Activated CD8-positive, alpha-beta memory T cell treated with anti-CD3 and anti-CD28 coated beads, Interleukin-2, amount 10 ng/mL, durations not matched to agents 7 days and 5 days (primary cell): ENCODE measurements at regions of chr1 and their contacts with region 1.

Region 1: GRCh38 chr1:9705337-9706093 is 54.0 kb downstream of the PIK3CD start:
- DNase-seq: no peak
- ATAC-seq: no peak
- H3K4me3 Mint-ChIP-seq: no peak overlapping the region
- H3K27ac Mint-ChIP-seq: peak overlapping the region; percentile 80
- H3K4me1 Mint-ChIP-seq: peaks cover 68% of the 10 kb centered on the region
- H3K27me3 Mint-ChIP-seq: no peaks in the 10 kb centered on the region

Region 2: DNA sequence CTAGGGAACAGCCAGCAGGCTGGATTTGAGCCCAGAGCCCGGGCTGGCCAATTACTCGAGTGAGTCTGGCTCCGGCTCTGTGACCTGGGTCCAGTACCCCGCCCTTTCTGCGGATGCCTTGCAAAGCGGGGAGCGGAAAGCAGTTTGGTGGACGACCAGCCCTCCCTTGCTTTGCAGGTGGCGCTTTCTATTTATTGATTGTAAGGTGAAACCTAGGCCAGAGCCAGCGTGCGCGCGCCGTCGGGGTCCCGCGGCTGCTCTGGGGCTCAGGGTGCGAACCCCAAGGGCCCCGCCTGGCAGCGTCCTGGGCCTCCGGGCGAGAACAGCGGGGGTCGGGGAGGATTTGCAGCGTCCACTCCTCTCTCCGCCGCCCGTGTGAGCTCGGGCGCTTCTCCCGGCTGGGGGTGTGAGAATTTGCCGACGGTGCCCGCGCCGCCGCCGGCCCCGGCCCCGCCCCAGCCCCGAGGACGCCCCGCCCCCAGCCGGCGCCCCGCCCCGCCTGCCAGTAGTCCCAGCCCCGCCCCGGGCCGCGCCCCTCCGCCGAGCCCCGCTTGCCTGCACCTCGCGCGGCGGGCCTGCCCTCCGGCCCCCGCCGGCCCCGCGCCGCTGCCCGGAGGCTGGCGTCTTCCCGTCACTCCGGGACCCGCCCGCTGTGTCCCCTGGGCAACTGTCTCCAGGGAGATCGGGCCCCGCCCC is 16.4 kb before region 1 on chr1:
- CTCF ChIA-PET with region 1: interaction called, 14 read pairs
- DNase-seq: peak; percentile 86
- ATAC-seq: peak; percentile 84
- H3K4me3 Mint-ChIP-seq: peak overlapping the region; percentile 70
- H3K27ac Mint-ChIP-seq: peak overlapping the region; percentile 85
- H3K4me1 Mint-ChIP-seq: peaks cover 68% of the 10 kb centered on the region
- H3K27me3 Mint-ChIP-seq: no peaks in the 10 kb centered on the region

Region 3: GRCh38 chr1:9717193-9718005 is 11.9 kb after region 1 on chr1:
- CTCF ChIA-PET with region 1: interaction called, 25 read pairs
- DNase-seq: peak; percentile 98
- ATAC-seq: peak; percentile 70
- H3K4me3 Mint-ChIP-seq: peak overlapping the region; percentile 87
- H3K27ac Mint-ChIP-seq: peak overlapping the region; percentile 96
- H3K4me1 Mint-ChIP-seq: peaks cover 78% of the 10 kb centered on the region
- H3K27me3 Mint-ChIP-seq: peaks cover 2% of the 10 kb centered on the region